BJ (cell line): ENCODE measurements at regions of chr9 and their contacts with region 1.

Region 1: DNA sequence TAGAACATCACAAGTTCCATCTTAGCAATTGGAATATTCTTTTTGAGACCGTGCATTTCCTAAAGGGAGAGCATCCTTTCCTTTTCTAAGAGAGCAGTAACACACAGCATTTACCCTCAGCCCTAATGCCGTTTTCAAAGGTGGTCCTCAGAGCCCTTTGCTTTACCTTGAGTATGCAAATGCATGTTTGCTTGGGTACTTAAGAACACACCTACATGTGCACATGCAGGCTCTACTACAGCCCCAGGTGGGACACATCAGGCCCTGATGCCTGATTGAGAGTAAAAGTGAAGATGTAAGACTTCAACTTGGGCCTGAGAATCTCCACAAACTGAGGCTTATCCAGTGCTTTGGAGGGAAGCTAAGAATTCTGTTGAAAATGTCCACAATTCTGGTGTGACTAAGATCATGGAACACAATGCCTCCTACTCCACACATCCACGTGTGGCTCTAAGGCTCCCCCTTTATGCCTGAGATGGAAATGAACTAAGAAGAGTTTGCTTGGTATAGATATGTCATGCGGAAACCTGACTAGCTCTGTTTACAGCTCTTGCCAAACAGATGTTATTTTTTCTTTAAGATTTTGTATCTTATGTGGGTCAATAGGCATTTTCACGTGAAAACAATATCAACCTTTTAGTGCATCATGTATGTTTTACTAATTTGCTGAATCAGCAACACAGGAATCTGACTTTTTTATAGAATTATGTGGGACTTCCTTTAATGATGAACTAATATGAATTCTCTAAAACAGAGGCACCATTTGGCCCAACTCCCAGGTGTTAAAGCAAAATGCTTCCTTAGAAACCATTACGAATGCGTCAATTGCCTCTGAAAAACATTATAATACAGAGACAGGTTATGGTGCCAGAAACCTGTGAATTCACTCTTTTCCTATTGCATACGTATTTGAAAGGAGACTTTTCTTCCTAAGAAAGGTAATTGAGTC is 48.9 kb upstream of the SLC2A8 start:
- DNase-seq: no peak
- H3K4me3 ChIP-seq: no peak overlapping the region
- H3K27me3 ChIP-seq: no peaks in the 10 kb centered on the region
- CTCF ChIP-seq: peak; percentile 75

Region 2: GRCh38 chr9:127214421-127215267 is 133.5 kb before region 1 on chr9:
- CTCF ChIA-PET with region 1: interaction called, 22 read pairs
- POLR2A ChIA-PET with region 1: no interaction called
- DNase-seq: no peak
- H3K4me3 ChIP-seq: no peak overlapping the region
- H3K27me3 ChIP-seq: peaks cover 9% of the 10 kb centered on the region
- CTCF ChIP-seq: peak; percentile 79

Region 3: GRCh38 chr9:127330501-127330900 is 17.6 kb before region 1 on chr9:
- CTCF ChIA-PET with region 1: no interaction called
- POLR2A ChIA-PET with region 1: no interaction called
- DNase-seq: no peak
- H3K4me3 ChIP-seq: no peak overlapping the region
- H3K27me3 ChIP-seq: no peaks in the 10 kb centered on the region
- CTCF ChIP-seq: no peak

Region 4: GRCh38 chr9:127694890-127695720 is 347.0 kb after region 1 on chr9:
- CTCF ChIA-PET with region 1: no interaction called
- POLR2A ChIA-PET with region 1: no interaction called
- DNase-seq: peak; percentile 50
- H3K4me3 ChIP-seq: no peak overlapping the region
- H3K27me3 ChIP-seq: no peaks in the 10 kb centered on the region
- CTCF ChIP-seq: no peak

Region 5: GRCh38 chr9:127916665-127917613 is 568.8 kb after region 1 on chr9 and contains the start of gene ST6GALNAC4:
- CTCF ChIA-PET with region 1: no interaction called
- POLR2A ChIA-PET with region 1: no interaction called
- DNase-seq: no peak
- H3K4me3 ChIP-seq: peak within 1 kb of the TSS; percentile 51
- H3K27me3 ChIP-seq: no peaks in the 10 kb centered on the region
- CTCF ChIP-seq: peak; percentile 5; the same call in 1 of the 2 replicates
- polyA plus RNA-seq, gene ST6GALNAC4: 21.4 and 35.5 TPM in 2 replicates